GM12878 (cell line): ENCODE measurements at regions of chr16 and their contacts with region 1.

Region 1: GRCh38 chr16:31873556-31874365 is at the start of gene ZNF267:
- DNase-seq: peak; percentile 50
- ATAC-seq: peak; percentile 73
- H3K4me3 ChIP-seq: peak within 1 kb of the TSS; percentile 94
- H3K27ac ChIP-seq: peak within 1 kb of the TSS; percentile 99
- H3K4me1 ChIP-seq: peaks cover 35% of the 10 kb centered on the region
- H3K27me3 ChIP-seq: no peaks in the 10 kb centered on the region
- CTCF ChIP-seq: no peak
- EP300 ChIP-seq: no peak
- POLR2A ChIP-seq: peak; percentile 89
- RAD21 ChIP-seq: no peak
- polyA plus RNA-seq, gene ZNF267: 16.3 to 18.9 TPM

Region 2: DNA sequence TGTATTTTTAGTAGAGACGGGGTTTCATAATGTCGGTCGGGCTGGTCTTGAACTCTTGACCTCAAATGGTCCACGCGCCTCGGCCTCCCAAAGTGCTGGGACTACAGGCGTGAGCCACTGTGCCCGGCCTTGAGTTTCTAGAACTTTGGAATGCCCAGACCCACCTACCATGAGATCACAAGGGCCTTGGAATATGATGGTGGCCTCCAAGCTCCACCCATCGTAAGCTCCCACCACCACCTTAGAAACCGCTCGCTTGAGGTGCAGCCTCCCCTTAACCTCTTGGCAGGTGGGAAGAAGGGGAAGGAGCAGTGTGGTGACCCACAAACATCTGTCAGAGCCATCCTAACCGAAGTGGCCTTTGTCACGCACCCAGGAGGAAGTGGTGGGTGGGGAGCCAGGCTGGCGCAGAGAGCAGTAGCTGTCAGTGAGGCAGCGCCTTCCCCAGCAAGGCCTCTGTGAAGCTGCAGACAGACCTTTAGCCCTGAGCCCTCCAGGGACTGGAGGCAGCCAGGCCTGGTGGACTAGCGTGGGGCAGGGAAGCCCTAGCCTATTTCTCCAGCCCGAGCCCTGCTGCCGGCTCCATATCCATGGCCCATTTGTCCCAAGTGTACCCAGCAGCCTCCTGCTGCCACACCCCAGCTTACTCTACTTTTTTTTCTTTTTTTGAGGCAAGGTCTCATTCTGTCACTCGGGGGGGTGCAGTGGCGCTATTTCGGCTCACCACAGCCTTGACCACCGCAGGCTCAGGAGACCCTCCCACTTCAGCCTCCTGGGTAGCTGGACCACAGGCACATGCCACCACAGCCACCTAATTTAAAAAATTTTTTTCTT is 1415.0 kb before region 1 on chr16:
- CTCF ChIA-PET with region 1: no interaction called
- POLR2A ChIA-PET with region 1: no interaction called
- RAD21 ChIA-PET with region 1: no interaction called
- SMC1A ChIA-PET with region 1: no interaction called
- in situ Hi-C with region 1: loop called (anchors 25 kb)
- intact Hi-C with region 1: no loop called
- DNase-seq: peak; percentile 97
- ATAC-seq: peak; percentile 86
- H3K4me3 ChIP-seq: peak overlapping the region; percentile 9; the same call in 1 of the 2 replicates
- H3K27ac ChIP-seq: peak overlapping the region; percentile 89
- H3K4me1 ChIP-seq: peaks cover 47% of the 10 kb centered on the region
- H3K27me3 ChIP-seq: no peaks in the 10 kb centered on the region
- CTCF ChIP-seq: no peak
- EP300 ChIP-seq: peak; percentile 99 to 100
- POLR2A ChIP-seq: peak; percentile 96
- RAD21 ChIP-seq: 0 out of 2 replicates have a peak, but pooled peaks have one; percentile 22

Region 3: GRCh38 chr16:30957456-30958174 is 916.1 kb before region 1 on chr16 and contains the start of gene SETD1A:
- CTCF ChIA-PET with region 1: interaction called, 15 read pairs
- POLR2A ChIA-PET with region 1: interaction called, 4 read pairs
- RAD21 ChIA-PET with region 1: no interaction called
- SMC1A ChIA-PET with region 1: no interaction called
- in situ Hi-C with region 1: loop called (anchors 10 kb)
- intact Hi-C with region 1: loop called (anchors 10 kb)
- DNase-seq: peak; percentile 57
- ATAC-seq: peak; percentile 92
- H3K4me3 ChIP-seq: peak within 1 kb of the TSS; percentile 92
- H3K27ac ChIP-seq: peak within 1 kb of the TSS; percentile 100
- H3K4me1 ChIP-seq: peaks cover 13% of the 10 kb centered on the region
- H3K27me3 ChIP-seq: no peaks in the 10 kb centered on the region
- CTCF ChIP-seq: no peak
- EP300 ChIP-seq: peak in 1 of 2 experiments; percentile 99; a peak in 2 of 4 replicates
- POLR2A ChIP-seq: peak; percentile 75
- RAD21 ChIP-seq: no peak
- polyA plus RNA-seq, gene SETD1A: 0.02 to 0.18 TPM

Region 4: GRCh38 chr16:31179747-31180459 is 693.9 kb before region 1 on chr16 and contains the start of gene FUS:
- CTCF ChIA-PET with region 1: no interaction called
- POLR2A ChIA-PET with region 1: interaction called, 5 read pairs
- RAD21 ChIA-PET with region 1: no interaction called
- SMC1A ChIA-PET with region 1: interaction called, 6 read pairs
- in situ Hi-C with region 1: no loop called
- intact Hi-C with region 1: loop called (anchors 10 kb)
- DNase-seq: peak; percentile 50
- ATAC-seq: peak; percentile 78
- H3K4me3 ChIP-seq: peak within 1 kb of the TSS; percentile 87
- H3K27ac ChIP-seq: peak within 1 kb of the TSS; percentile 98
- H3K4me1 ChIP-seq: peaks cover 22% of the 10 kb centered on the region
- H3K27me3 ChIP-seq: no peaks in the 10 kb centered on the region
- CTCF ChIP-seq: no peak
- EP300 ChIP-seq: no peak
- POLR2A ChIP-seq: peak; percentile 91
- RAD21 ChIP-seq: no peak
- polyA plus RNA-seq, gene FUS: 46.8 to 131 TPM

Region 5: GRCh38 chr16:31354394-31355291 is 519.1 kb before region 1 on chr16 and contains the start of gene ITGAX:
- CTCF ChIA-PET with region 1: interaction called, 5 read pairs
- POLR2A ChIA-PET with region 1: no interaction called
- RAD21 ChIA-PET with region 1: no interaction called
- SMC1A ChIA-PET with region 1: no interaction called
- in situ Hi-C with region 1: loop called (anchors 10 kb)
- intact Hi-C with region 1: loop called (anchors 10 kb)
- DNase-seq: peak; percentile 70
- ATAC-seq: peak; percentile 85
- H3K4me3 ChIP-seq: peak within 1 kb of the TSS; percentile 35; the same call in 1 of the 2 replicates
- H3K27ac ChIP-seq: peak within 1 kb of the TSS; percentile 79
- H3K4me1 ChIP-seq: peaks cover 55% of the 10 kb centered on the region
- H3K27me3 ChIP-seq: no peaks in the 10 kb centered on the region
- CTCF ChIP-seq: no peak
- EP300 ChIP-seq: peak in 1 of 2 experiments; percentile 74; a peak in 2 of 4 replicates
- POLR2A ChIP-seq: peak; percentile 45
- RAD21 ChIP-seq: no peak
- polyA plus RNA-seq, gene ITGAX: 1.6 to 3.2 TPM

Region 6: DNA sequence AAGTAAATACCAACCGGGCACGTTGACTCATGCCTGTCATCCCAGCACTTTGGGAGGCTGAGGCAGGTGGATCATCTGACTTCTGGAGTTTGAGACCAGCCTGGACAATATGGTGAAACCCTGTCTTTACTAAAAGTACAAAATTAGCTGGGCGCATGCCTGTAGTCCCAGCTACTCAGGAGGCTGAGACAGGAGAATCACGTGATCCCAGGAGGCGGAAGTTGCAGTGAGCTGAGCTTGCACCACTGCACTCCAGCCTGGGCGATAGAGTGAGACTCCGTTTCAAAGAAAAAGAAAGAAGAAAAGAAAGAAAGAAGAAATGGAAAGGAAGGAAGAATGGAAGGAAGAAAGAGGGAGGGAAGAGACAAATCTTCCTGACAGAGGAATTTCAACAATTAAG is 237.3 kb before region 1 on chr16:
- CTCF ChIA-PET with region 1: no interaction called
- POLR2A ChIA-PET with region 1: no interaction called
- RAD21 ChIA-PET with region 1: no interaction called
- SMC1A ChIA-PET with region 1: no interaction called
- in situ Hi-C with region 1: no loop called
- intact Hi-C with region 1: no loop called
- DNase-seq: no peak
- ATAC-seq: no peak
- H3K4me3 ChIP-seq: no peak overlapping the region
- H3K27ac ChIP-seq: no peak overlapping the region
- H3K4me1 ChIP-seq: no peaks in the 10 kb centered on the region
- H3K27me3 ChIP-seq: no peaks in the 10 kb centered on the region
- CTCF ChIP-seq: no peak
- EP300 ChIP-seq: no peak
- POLR2A ChIP-seq: no peak
- RAD21 ChIP-seq: no peak

Region 7: DNA sequence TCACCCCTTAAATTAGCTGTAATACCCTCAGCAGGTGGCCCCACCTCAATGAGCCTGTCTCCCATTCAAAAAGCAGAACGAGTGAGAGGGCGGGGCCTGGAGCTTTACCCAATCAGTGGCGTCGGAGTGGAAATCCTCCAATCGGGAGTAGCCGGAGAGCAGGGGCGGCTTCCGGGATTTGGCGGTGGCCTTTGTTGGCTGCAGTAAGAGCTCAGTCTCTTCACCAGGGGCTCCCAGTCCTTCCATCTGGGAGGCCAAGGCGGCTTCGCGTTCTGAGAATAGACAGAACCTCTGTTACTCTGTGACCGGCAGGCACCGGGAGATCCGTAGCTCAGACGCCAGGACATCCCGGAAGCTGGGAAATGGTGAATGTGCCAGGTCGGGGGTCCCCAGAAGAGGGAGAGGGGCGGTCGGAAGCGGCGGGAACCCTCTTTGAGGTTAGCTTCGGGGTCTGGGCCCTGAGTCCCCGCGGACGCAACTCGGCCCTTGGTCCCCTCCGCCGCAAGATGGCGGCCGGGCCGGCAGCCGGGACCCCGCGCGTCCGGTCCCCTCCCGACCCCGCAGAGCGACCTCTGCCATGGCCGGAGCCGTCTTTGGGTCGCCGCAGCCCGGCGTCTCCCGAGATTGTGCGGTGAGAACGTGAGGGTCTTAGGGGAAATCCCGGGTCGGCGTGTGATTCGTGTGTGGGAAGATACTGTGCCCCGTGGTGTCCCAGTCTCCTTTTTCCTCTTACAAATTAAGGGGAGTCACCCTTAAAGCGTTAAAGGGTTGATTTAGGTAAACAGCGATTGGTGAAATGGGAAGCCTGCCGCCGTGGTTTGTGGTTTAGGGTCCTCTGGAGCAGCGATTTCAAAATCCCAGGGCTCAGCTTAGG is 160.5 kb before region 1 on chr16:
- CTCF ChIA-PET with region 1: interaction called, 9 read pairs
- POLR2A ChIA-PET with region 1: no interaction called
- RAD21 ChIA-PET with region 1: interaction called, 7 read pairs
- SMC1A ChIA-PET with region 1: interaction called, 5 read pairs
- in situ Hi-C with region 1: loop called (anchors 5 kb)
- intact Hi-C with region 1: no loop called
- DNase-seq: peak; percentile 79
- ATAC-seq: peak; percentile 94
- H3K4me3 ChIP-seq: peak overlapping the region; percentile 75
- H3K27ac ChIP-seq: peak overlapping the region; percentile 96
- H3K4me1 ChIP-seq: peaks cover 6% of the 10 kb centered on the region
- H3K27me3 ChIP-seq: no peaks in the 10 kb centered on the region
- CTCF ChIP-seq: no peak
- EP300 ChIP-seq: no peak
- POLR2A ChIP-seq: peak; percentile 97
- RAD21 ChIP-seq: no peak

Region 8: DNA sequence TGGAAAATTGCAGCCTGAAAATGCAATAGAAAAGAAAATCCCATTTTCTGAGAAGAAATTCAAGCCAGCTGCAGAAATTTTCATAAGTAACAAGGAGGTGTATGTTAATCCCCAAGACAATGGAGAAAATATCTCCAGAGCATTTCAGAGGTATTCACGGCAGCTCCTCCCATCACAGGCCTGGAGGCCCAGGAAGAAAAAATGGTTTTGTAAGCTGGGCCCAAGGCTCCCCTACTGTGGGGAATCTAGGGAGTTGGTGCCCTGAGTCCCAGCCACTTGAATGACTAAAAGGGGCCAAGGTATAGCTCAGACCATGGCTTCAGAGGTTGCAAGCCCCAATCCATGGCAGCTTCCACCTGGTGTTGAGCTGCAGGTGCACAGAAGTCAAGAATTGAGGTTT is 93.4 kb before region 1 on chr16:
- CTCF ChIA-PET with region 1: no interaction called
- POLR2A ChIA-PET with region 1: no interaction called
- RAD21 ChIA-PET with region 1: no interaction called
- SMC1A ChIA-PET with region 1: no interaction called
- in situ Hi-C with region 1: no loop called
- intact Hi-C with region 1: no loop called
- DNase-seq: no peak
- ATAC-seq: no peak
- H3K4me3 ChIP-seq: no peak overlapping the region
- H3K27ac ChIP-seq: no peak overlapping the region
- H3K4me1 ChIP-seq: no peaks in the 10 kb centered on the region
- H3K27me3 ChIP-seq: no peaks in the 10 kb centered on the region
- CTCF ChIP-seq: no peak
- EP300 ChIP-seq: no peak
- POLR2A ChIP-seq: no peak
- RAD21 ChIP-seq: no peak

Region 9: GRCh38 chr16:31810863-31811262 is 62.9 kb before region 1 on chr16:
- CTCF ChIA-PET with region 1: no interaction called
- POLR2A ChIA-PET with region 1: no interaction called
- RAD21 ChIA-PET with region 1: no interaction called
- SMC1A ChIA-PET with region 1: no interaction called
- in situ Hi-C with region 1: no loop called
- intact Hi-C with region 1: no loop called
- DNase-seq: no peak
- ATAC-seq: no peak
- H3K4me3 ChIP-seq: no peak overlapping the region
- H3K27ac ChIP-seq: no peak overlapping the region
- H3K4me1 ChIP-seq: no peaks in the 10 kb centered on the region
- H3K27me3 ChIP-seq: no peaks in the 10 kb centered on the region
- CTCF ChIP-seq: no peak
- EP300 ChIP-seq: no peak
- POLR2A ChIP-seq: no peak
- RAD21 ChIP-seq: no peak